Naive thymus-derived CD4-positive, alpha-beta T cell (primary cell): ENCODE measurements at regions of chr12 and their contacts with region 1.

Region 1: GRCh38 chr12:108803428-108804105 is 53.8 kb downstream of the SSH1 start:
- DNase-seq: peak; percentile 25 to 78 (median 70)
- ATAC-seq: peak; percentile 93
- H3K4me3 ChIP-seq: no peak overlapping the region
- H3K4me3 Mint-ChIP-seq: no peak overlapping the region
- H3K27ac ChIP-seq: no peak overlapping the region
- H3K27ac Mint-ChIP-seq: peak overlapping the region in 3 of 9 donors; percentile 37 to 62 (median 48)
- H3K4me1 ChIP-seq: peaks cover 0 to 3% of the 10 kb centered on the region in 2 donors
- H3K4me1 Mint-ChIP-seq: peaks cover 0 to 10% (median 3%) of the 10 kb centered on the region in 7 donors
- H3K27me3 ChIP-seq: no peaks in the 10 kb centered on the region
- H3K27me3 Mint-ChIP-seq: no peaks in the 10 kb centered on the region

Region 2: GRCh38 chr12:108611884-108612415 is 191.6 kb before region 1 on chr12:
- CTCF ChIA-PET with region 1: interaction called, 23 read pairs
- POLR2A ChIA-PET with region 1: no interaction called
- intact Hi-C with region 1: loop called in 1 of 2 experiments (anchors 1 kb)
- DNase-seq: peak in 5 of 9 donors; percentile 28 to 48 (median 43)
- ATAC-seq: peak; percentile 51
- H3K4me3 ChIP-seq: no peak overlapping the region
- H3K4me3 Mint-ChIP-seq: no peak overlapping the region
- H3K27ac ChIP-seq: no peak overlapping the region
- H3K27ac Mint-ChIP-seq: peak overlapping the region in 3 of 9 donors; percentile 16 to 56 (median 30)
- H3K4me1 ChIP-seq: peaks cover 6 to 10% of the 10 kb centered on the region in 2 donors
- H3K4me1 Mint-ChIP-seq: peaks cover 8 to 25% (median 14%) of the 10 kb centered on the region in 7 donors
- H3K27me3 ChIP-seq: no peaks in the 10 kb centered on the region
- H3K27me3 Mint-ChIP-seq: no peaks in the 10 kb centered on the region

Region 3: GRCh38 chr12:108691175-108691997 is 112.2 kb before region 1 on chr12:
- CTCF ChIA-PET with region 1: interaction called, 5 read pairs
- POLR2A ChIA-PET with region 1: interaction called, 3 read pairs
- intact Hi-C with region 1: loop called in 1 of 2 experiments (anchors 1 kb)
- DNase-seq: peak in 8 of 9 donors; percentile 5 to 57 (median 20)
- ATAC-seq: peak; percentile 87
- H3K4me3 ChIP-seq: peak overlapping the region; percentile 43
- H3K4me3 Mint-ChIP-seq: peak overlapping the region; percentile 58 to 77 (median 70)
- H3K27ac ChIP-seq: no peak overlapping the region
- H3K27ac Mint-ChIP-seq: peak overlapping the region in 7 of 9 donors; percentile 1 to 86 (median 53)
- H3K4me1 ChIP-seq: peaks cover 28 to 32% of the 10 kb centered on the region in 2 donors
- H3K4me1 Mint-ChIP-seq: peaks cover 42 to 65% (median 63%) of the 10 kb centered on the region in 7 donors
- H3K27me3 ChIP-seq: no peaks in the 10 kb centered on the region
- H3K27me3 Mint-ChIP-seq: no peaks in the 10 kb centered on the region